ENCODE measurements at regions of chr4 and their contacts with region 1.

Region 1: GRCh38 chr4:124334119-124334518 is 378.4 kb downstream of the ANKRD50 start:
- DNase-seq: peak; percentile 61
- H3K4me3 ChIP-seq: no peak overlapping the region
- CTCF ChIP-seq: peak; percentile 47

Region 2: DNA sequence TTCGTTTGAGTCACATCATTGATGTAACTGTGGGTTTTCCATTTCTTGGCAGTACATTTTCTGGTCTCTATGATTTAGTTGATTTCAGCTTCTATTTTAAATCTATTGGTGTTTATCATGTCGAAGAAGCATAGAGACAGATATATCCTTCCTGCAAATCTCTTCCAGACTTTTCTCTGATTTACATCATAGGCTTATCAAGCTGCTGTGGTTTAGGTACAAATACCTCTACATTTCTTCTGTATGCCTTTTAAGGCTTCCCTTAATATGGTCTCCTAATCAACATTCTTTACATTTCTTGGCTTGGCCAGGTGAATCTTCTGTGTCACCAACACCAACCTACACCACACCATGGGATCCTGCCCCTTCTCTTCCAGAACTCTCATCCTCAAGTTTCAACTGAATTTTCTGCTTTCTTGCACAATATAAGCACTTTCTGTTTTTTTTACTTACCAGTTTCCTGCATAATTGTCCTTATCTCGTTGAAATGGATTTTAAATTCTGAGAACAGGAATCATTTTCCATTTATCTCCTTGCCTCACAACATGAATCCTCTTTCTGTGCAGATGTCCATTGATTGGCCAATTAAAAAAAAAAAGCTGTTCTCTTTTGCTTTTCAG is 248.4 kb before region 1 on chr4:
- CTCF ChIA-PET with region 1: no interaction called
- POLR2A ChIA-PET with region 1: no interaction called
- DNase-seq: no peak
- H3K4me3 ChIP-seq: no peak overlapping the region
- CTCF ChIP-seq: no peak

Region 3: DNA sequence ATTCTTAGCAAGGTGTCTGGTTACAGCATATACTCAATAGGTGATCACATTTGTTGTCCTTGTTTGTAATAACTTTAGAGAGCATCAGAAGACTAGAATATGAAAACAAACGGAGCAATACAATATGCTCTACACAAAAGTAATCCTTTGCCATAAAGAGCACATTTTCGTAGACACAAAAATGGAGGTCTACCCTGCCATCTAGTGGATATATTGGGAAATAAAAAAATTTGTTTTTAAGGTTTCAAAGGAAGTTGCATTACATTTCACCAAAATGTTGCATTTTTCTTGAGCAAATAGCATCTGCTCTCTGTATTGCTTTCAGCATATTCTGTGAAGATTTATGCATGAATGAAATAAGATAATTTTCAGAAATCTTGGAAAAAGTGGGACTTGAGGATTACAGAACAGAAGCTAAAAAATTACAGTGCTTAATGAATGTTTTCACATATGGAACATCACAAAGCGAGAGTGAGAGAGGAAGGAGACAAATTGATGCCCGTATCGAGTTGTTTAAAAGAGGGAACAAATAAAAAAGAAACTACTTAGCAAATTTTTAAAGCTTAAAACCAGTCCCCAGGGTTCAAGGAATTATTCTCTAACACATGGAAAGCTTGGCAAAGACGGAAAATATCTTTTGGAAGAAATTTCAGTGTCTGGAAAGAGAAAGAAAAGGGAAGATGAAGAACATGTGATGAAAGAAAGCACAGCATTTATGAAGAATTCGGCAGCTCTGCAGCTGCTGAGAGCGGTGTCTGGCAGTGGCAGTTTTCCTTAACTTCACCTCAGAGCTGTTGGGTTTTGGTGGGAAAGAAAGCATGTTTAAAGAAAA is 11.7 kb before region 1 on chr4:
- CTCF ChIA-PET with region 1: interaction called, 38 read pairs
- POLR2A ChIA-PET with region 1: no interaction called
- DNase-seq: no peak
- H3K4me3 ChIP-seq: no peak overlapping the region
- CTCF ChIP-seq: no peak

Region 4: DNA sequence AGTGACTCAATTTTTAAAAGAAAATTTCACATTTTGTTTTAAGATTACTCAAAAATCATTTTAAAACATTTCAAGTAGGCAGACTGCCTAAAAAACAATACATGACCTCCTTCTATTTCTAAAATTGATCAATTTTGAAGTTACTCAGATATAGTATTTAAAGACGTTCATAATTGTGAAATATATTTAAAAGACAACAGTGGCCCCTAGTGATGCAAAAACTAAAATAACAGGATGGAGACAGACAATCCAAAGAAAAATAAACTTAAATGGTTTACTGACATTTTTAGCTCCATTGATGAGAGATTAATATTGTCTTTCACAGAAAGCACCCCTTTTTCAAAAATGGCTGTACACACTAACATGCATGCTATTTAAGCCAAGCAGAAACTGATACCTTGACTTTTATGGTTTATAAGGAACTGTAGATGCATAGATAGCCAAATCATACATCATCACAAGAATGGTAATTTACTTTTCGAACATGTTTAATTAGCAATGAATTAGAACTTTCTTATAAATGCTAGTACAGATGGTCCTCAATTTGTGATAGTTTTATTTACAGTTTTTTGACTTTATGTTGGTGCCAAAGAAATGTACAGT is 910.8 kb after region 1 on chr4:
- CTCF ChIA-PET with region 1: interaction called, 109 read pairs
- POLR2A ChIA-PET with region 1: no interaction called
- DNase-seq: no peak
- H3K4me3 ChIP-seq: no peak overlapping the region
- CTCF ChIP-seq: no peak